GM12878 (cell line): ENCODE measurements at regions of chr5 and their contacts with region 1.

Region 1: GRCh38 chr5:82225525-82226172 is 52.5 kb downstream of the RPS23 start:
- DNase-seq: peak; percentile 37
- ATAC-seq: peak; percentile 97
- H3K4me3 ChIP-seq: no peak overlapping the region
- H3K27ac ChIP-seq: no peak overlapping the region
- H3K4me1 ChIP-seq: no peaks in the 10 kb centered on the region
- H3K27me3 ChIP-seq: no peaks in the 10 kb centered on the region
- CTCF ChIP-seq: peak; percentile 82 to 94 (median 89)
- EP300 ChIP-seq: no peak
- POLR2A ChIP-seq: no peak
- RAD21 ChIP-seq: peak; percentile 96

Region 2: GRCh38 chr5:81506900-81507588 is 718.6 kb before region 1 on chr5:
- CTCF ChIA-PET with region 1: interaction called, 8 read pairs
- POLR2A ChIA-PET with region 1: no interaction called
- RAD21 ChIA-PET with region 1: interaction called, 8 read pairs
- SMC1A ChIA-PET with region 1: interaction called, 14 read pairs
- in situ Hi-C with region 1: loop called (anchors 5 kb)
- intact Hi-C with region 1: loop called (anchors 5 kb)
- DNase-seq: peak; percentile 67
- ATAC-seq: peak; percentile 100
- H3K4me3 ChIP-seq: no peak overlapping the region
- H3K27ac ChIP-seq: no peak overlapping the region
- H3K4me1 ChIP-seq: no peaks in the 10 kb centered on the region
- H3K27me3 ChIP-seq: no peaks in the 10 kb centered on the region
- CTCF ChIP-seq: peak; percentile 84 to 91 (median 90); a peak in 5 of 6 replicates
- EP300 ChIP-seq: no peak
- POLR2A ChIP-seq: no peak
- RAD21 ChIP-seq: peak; percentile 92

Region 3: DNA sequence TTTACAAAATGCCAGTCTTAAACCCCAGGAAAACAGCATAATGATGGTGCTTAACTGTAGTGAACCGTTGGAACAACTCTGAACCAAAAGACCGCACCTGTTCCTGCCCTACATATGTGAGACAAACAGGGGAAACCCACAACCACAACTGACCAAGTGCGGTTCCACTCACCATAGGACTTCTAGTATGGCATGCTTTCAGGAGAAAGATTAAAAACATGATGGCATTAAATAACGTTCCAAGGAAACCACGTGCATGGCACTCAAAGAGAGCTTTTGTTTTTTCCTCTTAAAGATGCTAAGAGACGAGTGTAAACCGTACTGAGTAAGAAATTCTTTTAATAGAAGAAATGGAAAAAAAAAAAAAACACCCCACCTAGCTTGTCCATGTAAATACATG is 594.5 kb before region 1 on chr5:
- CTCF ChIA-PET with region 1: no interaction called
- POLR2A ChIA-PET with region 1: no interaction called
- RAD21 ChIA-PET with region 1: no interaction called
- SMC1A ChIA-PET with region 1: no interaction called
- in situ Hi-C with region 1: no loop called
- intact Hi-C with region 1: no loop called
- DNase-seq: peak; percentile 51
- ATAC-seq: peak; percentile 90
- H3K4me3 ChIP-seq: no peak overlapping the region
- H3K27ac ChIP-seq: peak overlapping the region; percentile 35
- H3K4me1 ChIP-seq: peaks cover 26% of the 10 kb centered on the region; the same call in 1 of the 2 replicates
- H3K27me3 ChIP-seq: no peaks in the 10 kb centered on the region
- CTCF ChIP-seq: no peak
- EP300 ChIP-seq: peak; percentile 36 to 53; a peak in 1 of 4 replicates
- POLR2A ChIP-seq: no peak
- RAD21 ChIP-seq: no peak

Region 4: DNA sequence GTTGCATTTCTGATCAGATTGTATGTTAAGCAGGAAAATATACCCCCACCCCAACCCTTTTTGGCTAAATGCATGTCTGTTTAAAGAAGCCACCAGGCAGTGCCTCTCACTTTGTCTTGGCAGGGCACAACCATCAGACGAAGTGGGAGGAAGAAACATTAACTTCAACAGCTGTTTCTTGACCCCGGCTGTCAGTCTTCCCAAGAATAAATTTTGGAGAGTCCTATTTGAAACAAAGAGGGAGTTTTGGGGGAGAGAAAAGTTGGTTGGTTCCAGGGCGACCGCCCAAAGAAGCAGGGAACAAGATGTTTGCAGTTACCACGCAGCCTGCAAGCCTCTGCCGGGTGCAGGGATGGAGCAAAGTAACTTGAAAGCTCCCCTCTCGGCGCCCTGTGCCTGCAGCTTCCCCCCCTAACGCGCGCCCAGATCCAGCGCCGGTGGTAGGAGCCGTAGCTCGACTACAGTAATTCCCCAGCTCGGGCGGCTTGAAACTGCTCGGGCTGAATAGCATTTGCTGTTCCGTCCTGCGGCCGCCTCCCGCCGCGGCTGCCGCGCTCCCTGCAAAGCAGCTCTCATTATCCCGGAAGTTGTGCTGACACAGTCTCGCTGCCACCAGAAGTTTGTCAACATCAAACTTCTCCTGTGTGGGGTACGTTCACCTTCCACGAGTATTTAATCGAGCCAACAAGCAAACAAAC is 374.0 kb before region 1 on chr5:
- CTCF ChIA-PET with region 1: no interaction called
- POLR2A ChIA-PET with region 1: no interaction called
- RAD21 ChIA-PET with region 1: interaction called, 3 read pairs
- SMC1A ChIA-PET with region 1: interaction called, 6 read pairs
- in situ Hi-C with region 1: no loop called
- intact Hi-C with region 1: loop called (anchors 5 kb)
- DNase-seq: peak; percentile 77
- ATAC-seq: peak; percentile 87
- H3K4me3 ChIP-seq: peak overlapping the region; percentile 55
- H3K27ac ChIP-seq: peak overlapping the region; percentile 87
- H3K4me1 ChIP-seq: peaks cover 26% of the 10 kb centered on the region
- H3K27me3 ChIP-seq: no peaks in the 10 kb centered on the region
- CTCF ChIP-seq: no peak
- EP300 ChIP-seq: peak; percentile 45 to 99; a peak in 3 of 4 replicates
- POLR2A ChIP-seq: peak; percentile 86
- RAD21 ChIP-seq: peak; percentile 31; the same call in 1 of the 2 replicates

Region 5: GRCh38 chr5:82107267-82107666 is 118.4 kb before region 1 on chr5:
- CTCF ChIA-PET with region 1: interaction called, 54 read pairs
- POLR2A ChIA-PET with region 1: no interaction called
- RAD21 ChIA-PET with region 1: interaction called, 25 read pairs
- SMC1A ChIA-PET with region 1: interaction called, 26 read pairs
- in situ Hi-C with region 1: no loop called
- intact Hi-C with region 1: loop called (anchors 1 kb)
- DNase-seq: no peak
- ATAC-seq: peak; percentile 51
- H3K4me3 ChIP-seq: no peak overlapping the region
- H3K27ac ChIP-seq: no peak overlapping the region
- H3K4me1 ChIP-seq: no peaks in the 10 kb centered on the region
- H3K27me3 ChIP-seq: no peaks in the 10 kb centered on the region
- CTCF ChIP-seq: peak; percentile 29 to 50 (median 49); a peak in 5 of 6 replicates
- EP300 ChIP-seq: no peak
- POLR2A ChIP-seq: no peak
- RAD21 ChIP-seq: peak; percentile 57

Region 6: DNA sequence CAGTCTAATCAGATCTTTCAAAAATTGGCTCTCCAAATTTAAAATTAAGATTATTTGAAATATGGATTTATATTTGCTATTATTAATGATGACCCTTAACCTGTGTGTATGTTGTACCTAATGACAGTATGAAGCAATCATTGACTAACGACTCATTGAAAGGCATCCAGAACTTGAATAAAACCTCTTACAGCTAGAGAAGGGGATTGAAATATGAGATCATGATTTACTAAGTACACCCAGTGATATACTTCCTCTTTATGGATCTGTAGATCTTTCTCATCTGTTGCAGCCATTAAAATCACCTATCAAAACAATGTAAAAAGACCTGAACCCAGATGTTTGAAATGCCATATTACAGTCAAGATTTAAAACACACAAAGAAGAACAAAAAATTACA is 74.0 kb before region 1 on chr5:
- CTCF ChIA-PET with region 1: no interaction called
- POLR2A ChIA-PET with region 1: no interaction called
- RAD21 ChIA-PET with region 1: no interaction called
- SMC1A ChIA-PET with region 1: no interaction called
- in situ Hi-C with region 1: no loop called
- intact Hi-C with region 1: no loop called
- DNase-seq: no peak
- ATAC-seq: no peak
- H3K4me3 ChIP-seq: no peak overlapping the region
- H3K27ac ChIP-seq: no peak overlapping the region
- H3K4me1 ChIP-seq: no peaks in the 10 kb centered on the region
- H3K27me3 ChIP-seq: no peaks in the 10 kb centered on the region
- CTCF ChIP-seq: no peak
- EP300 ChIP-seq: no peak
- POLR2A ChIP-seq: no peak
- RAD21 ChIP-seq: no peak

Region 7: GRCh38 chr5:82183828-82184227 is 41.8 kb before region 1 on chr5:
- CTCF ChIA-PET with region 1: interaction called, 15 read pairs
- POLR2A ChIA-PET with region 1: no interaction called
- RAD21 ChIA-PET with region 1: interaction called, 4 read pairs
- SMC1A ChIA-PET with region 1: interaction called, 159 read pairs
- in situ Hi-C with region 1: no loop called
- intact Hi-C with region 1: no loop called
- DNase-seq: peak; percentile 17
- ATAC-seq: peak; percentile 81
- H3K4me3 ChIP-seq: no peak overlapping the region
- H3K27ac ChIP-seq: no peak overlapping the region
- H3K4me1 ChIP-seq: no peaks in the 10 kb centered on the region
- H3K27me3 ChIP-seq: no peaks in the 10 kb centered on the region
- CTCF ChIP-seq: no peak
- EP300 ChIP-seq: peak in 1 of 2 experiments; percentile 35; a peak in 1 of 4 replicates
- POLR2A ChIP-seq: no peak
- RAD21 ChIP-seq: no peak

Region 8: GRCh38 chr5:82244854-82245635 is 19.4 kb after region 1 on chr5:
- CTCF ChIA-PET with region 1: interaction called, 15 read pairs
- POLR2A ChIA-PET with region 1: no interaction called
- RAD21 ChIA-PET with region 1: interaction called, 5 read pairs
- SMC1A ChIA-PET with region 1: interaction called, 4 read pairs
- in situ Hi-C with region 1: no loop called
- intact Hi-C with region 1: no loop called
- DNase-seq: no peak
- ATAC-seq: no peak
- H3K4me3 ChIP-seq: no peak overlapping the region
- H3K27ac ChIP-seq: no peak overlapping the region
- H3K4me1 ChIP-seq: no peaks in the 10 kb centered on the region
- H3K27me3 ChIP-seq: no peaks in the 10 kb centered on the region
- CTCF ChIP-seq: no peak
- EP300 ChIP-seq: no peak
- POLR2A ChIP-seq: no peak
- RAD21 ChIP-seq: no peak